Activated naive CD8-positive, alpha-beta T cell treated with anti-CD3 and anti-CD28 coated beads, Interleukin-2, amount 10 ng/mL, durations not matched to agents 7 days and 5 days (primary cell): ENCODE measurements at regions of chr3 and their contacts with region 1.

Region 1: GRCh38 chr3:146469150-146470017 is at the start of gene PLSCR2:
- DNase-seq: peak; percentile 83
- ATAC-seq: peak; percentile 98
- H3K4me3 Mint-ChIP-seq: peak within 1 kb of the TSS; percentile 80
- H3K27ac Mint-ChIP-seq: peak within 1 kb of the TSS; percentile 76
- H3K4me1 Mint-ChIP-seq: peaks cover 4% of the 10 kb centered on the region
- H3K27me3 Mint-ChIP-seq: peaks cover 12% of the 10 kb centered on the region
- total RNA-seq, gene PLSCR2: not detected

Region 2: GRCh38 chr3:146421889-146422288 is 47.5 kb before region 1 on chr3:
- POLR2A ChIA-PET with region 1: no interaction called
- DNase-seq: no peak
- ATAC-seq: no peak
- H3K4me3 Mint-ChIP-seq: no peak overlapping the region
- H3K27ac Mint-ChIP-seq: no peak overlapping the region
- H3K4me1 Mint-ChIP-seq: no peaks in the 10 kb centered on the region
- H3K27me3 Mint-ChIP-seq: peaks cover 6% of the 10 kb centered on the region

Region 3: DNA sequence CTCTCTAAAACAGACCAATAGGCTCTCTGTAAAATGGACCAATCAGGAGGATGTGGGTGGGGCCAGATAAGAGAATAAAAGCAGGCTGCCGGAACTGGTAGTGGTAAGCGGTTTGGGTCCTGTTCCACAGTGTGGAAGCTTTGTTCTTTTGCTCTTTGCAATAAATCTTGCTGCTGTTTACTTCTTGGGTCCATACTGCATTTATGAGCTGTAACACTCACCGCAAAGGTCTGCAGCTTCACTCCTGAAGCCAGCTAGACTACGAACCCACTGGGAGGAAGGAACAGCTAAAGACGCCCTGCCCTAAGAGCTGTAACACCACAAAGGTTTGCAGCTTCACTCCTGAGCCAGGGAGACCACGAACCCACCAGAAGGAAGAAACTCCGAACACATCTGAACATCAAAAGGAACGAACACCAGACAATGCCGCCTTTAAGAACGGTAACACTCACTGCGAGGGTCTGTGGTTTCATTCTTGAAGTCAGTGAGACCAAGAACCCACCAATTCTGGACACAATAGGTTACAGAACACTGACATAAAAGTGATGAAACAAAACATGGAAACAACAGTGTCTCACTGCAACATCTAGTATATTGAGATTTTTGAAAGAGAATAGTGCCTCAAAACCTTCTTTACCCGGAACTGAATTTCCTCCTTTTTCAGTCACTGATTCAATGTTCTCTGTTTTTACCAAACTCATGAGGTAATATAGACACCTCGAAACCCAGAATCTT is 28.8 kb after region 1 on chr3:
- POLR2A ChIA-PET with region 1: interaction called, 12 read pairs
- DNase-seq: peak; percentile 65
- ATAC-seq: peak; percentile 76
- H3K4me3 Mint-ChIP-seq: peak overlapping the region; percentile 72
- H3K27ac Mint-ChIP-seq: peak overlapping the region; percentile 92
- H3K4me1 Mint-ChIP-seq: peaks cover 22% of the 10 kb centered on the region
- H3K27me3 Mint-ChIP-seq: peaks cover 6% of the 10 kb centered on the region